Psoas muscle (tissue), 8 donors: ENCODE measurements at regions of chr15 and their contacts with region 1.

Region 1: GRCh38 chr15:72199711-72200212 is 2.2 kb upstream of the GRAMD2A start:
- DNase-seq: peak; percentile 80 to 88
- ATAC-seq: peak; percentile 61 to 75 (median 68)
- H3K4me3 ChIP-seq: no peak overlapping the region
- H3K27ac ChIP-seq: peak overlapping the region; percentile 91
- H3K4me1 ChIP-seq: peaks cover 49% of the 10 kb centered on the region
- H3K27me3 ChIP-seq: no peaks in the 10 kb centered on the region
- CTCF ChIP-seq: peak; percentile 93

Region 2: DNA sequence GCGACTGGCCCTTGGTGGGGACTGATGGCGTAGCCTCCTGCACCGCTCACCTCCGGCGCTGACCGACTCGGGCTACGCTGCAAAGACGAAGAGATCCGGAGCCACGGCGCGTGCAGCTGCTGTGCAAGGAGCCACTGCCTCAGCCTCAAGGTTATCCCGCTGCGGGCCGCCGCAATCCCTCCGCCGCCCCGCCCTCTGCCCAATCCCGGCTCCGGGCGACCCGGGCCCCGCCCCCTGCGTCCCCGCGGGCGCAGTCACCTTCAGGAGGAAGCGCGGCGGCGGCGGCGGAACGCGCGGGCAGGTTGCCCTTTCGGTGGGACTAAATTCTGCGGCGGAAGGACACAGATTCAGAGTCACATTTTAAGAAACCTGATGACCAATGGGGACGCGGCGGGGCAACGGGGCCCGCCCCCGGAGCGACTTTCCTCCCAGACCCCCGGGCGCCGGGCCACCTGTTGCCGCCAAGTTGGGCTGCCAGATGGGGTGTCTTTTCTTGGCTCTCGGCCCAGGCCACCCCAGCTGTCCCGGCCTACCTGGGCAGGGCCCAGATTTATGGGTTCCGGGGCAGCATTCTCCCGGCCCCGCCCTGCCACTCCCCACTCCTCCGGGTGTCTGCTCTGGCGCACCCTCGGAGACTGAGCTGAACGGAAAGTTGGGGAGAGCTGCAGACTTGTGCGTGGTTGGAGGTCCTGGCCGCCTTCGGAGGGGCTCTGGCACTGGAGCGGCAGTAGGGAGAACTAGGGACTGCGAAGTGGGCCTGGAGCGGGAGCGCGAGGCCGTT is 31.5 kb after region 1 on chr15 and contains the start of gene PKM:
- intact Hi-C with region 1: loop called (anchors 2 to 5 kb)
- DNase-seq: peak; percentile 97 to 98
- ATAC-seq: peak; percentile 81 to 85 (median 84)
- H3K4me3 ChIP-seq: peak within 1 kb of the TSS; percentile 99
- H3K27ac ChIP-seq: peak within 1 kb of the TSS; percentile 99
- H3K4me1 ChIP-seq: peaks cover 39% of the 10 kb centered on the region
- H3K27me3 ChIP-seq: no peaks in the 10 kb centered on the region
- CTCF ChIP-seq: no peak
- total RNA-seq, gene PKM: 513 to 1,170 (median 767) TPM

Region 3: GRCh38 chr15:72285927-72286516 is 86.3 kb after region 1 on chr15:
- intact Hi-C with region 1: loop called (anchors 2 kb)
- DNase-seq: peak; percentile 41 to 71
- ATAC-seq: peak; percentile 61 to 93 (median 80)
- H3K4me3 ChIP-seq: no peak overlapping the region
- H3K27ac ChIP-seq: no peak overlapping the region
- H3K4me1 ChIP-seq: no peaks in the 10 kb centered on the region
- H3K27me3 ChIP-seq: no peaks in the 10 kb centered on the region
- CTCF ChIP-seq: peak; percentile 72

Region 4: DNA sequence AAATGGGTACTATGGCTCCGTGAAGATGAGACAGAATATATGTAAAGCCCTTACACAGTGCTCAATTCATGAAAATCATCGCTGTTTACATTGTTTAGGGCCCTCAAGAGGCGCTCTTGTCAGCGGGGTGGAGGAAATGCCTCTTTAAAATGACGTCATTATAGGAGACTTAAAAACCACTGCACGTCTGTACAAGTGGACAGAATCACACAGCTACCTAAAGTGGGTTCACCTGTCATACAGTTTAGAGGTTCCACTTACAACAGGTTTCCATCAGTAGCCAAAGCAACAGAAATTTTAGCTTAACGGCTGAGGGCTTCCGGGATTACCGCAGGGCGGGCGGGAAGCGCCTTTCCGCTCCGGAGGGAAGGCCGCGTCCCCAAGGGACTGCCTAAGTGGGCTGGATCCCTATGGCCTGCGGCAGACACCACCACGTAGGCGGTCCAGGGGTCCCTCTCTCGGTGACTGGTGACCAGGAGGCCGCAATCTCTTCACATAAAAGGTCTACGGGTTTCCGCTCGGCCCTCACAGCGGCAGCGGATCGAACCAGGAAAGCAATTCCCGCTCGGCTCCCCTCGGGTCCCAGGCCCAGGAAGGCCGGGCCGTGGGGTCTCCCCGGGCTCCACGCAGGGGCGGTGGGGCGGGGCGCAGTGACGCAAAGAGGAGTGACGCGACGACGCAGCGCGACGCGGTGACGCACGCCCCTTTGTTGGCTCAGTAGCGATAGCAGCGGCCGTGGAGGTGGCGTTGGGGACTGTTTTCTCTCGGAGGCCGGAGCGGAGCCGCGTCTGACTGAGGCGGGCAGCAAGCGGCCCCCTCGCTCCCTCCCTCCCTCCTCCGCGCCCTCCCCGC is 274.1 kb after region 1 on chr15 and contains the start of gene ARIH1:
- intact Hi-C with region 1: loop called in 1 of 2 experiments (anchors 10 kb)
- DNase-seq: peak; percentile 97 to 99
- ATAC-seq: peak; percentile 95 to 97 (median 96)
- H3K4me3 ChIP-seq: peak within 1 kb of the TSS; percentile 90
- H3K27ac ChIP-seq: peak within 1 kb of the TSS; percentile 100
- H3K4me1 ChIP-seq: peaks cover 30% of the 10 kb centered on the region
- H3K27me3 ChIP-seq: no peaks in the 10 kb centered on the region
- CTCF ChIP-seq: peak; percentile 34
- total RNA-seq, gene ARIH1: 181 to 253 (median 204) TPM